Left cardiac atrium (tissue), 4 donors: ENCODE measurements at regions of chr11 and their contacts with region 1.

Region 1: GRCh38 chr11:70191495-70192140 is 11.5 kb upstream of the FADD start:
- DNase-seq: peak; percentile 82
- ATAC-seq: peak; percentile 87 to 88

Region 2: DNA sequence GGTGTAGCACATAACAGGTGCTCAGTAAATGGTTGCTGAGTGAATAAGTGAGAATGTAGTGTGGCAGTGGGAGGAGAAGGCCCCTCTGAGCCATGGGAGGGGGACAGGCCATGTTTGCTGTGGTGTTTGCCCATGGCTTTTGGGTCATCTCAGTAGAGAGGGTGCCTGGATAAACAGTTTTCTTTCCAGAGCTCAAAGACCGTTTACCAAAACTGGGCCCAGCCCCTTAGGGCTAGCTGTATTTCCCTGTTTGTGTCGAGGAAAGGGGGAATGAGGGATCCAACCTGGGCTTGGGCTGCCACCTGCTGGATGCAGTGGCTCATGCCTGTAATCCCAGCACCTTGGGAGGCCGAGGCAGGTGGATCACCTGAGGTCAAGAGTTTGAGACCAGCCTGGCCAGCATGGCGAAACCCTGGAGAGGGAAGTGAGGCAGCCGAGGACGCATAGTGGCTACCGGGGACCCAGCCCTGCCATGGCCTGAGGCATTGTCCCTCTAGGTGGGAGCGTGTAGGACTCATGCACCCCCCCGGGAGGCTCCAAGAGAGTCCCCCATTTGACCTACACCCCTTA is 507.8 kb before region 1 on chr11:
- intact Hi-C with region 1: loop called (anchors 5 to 10 kb)
- DNase-seq: no peak
- ATAC-seq: no peak

Region 3: GRCh38 chr11:69918938-69919650 is 272.5 kb before region 1 on chr11:
- intact Hi-C with region 1: loop called (anchors 2 to 5 kb)
- DNase-seq: peak; percentile 88
- ATAC-seq: peak; percentile 65 to 76